ENCODE measurements at regions of chr14 and their contacts with region 1.

Region 1: DNA sequence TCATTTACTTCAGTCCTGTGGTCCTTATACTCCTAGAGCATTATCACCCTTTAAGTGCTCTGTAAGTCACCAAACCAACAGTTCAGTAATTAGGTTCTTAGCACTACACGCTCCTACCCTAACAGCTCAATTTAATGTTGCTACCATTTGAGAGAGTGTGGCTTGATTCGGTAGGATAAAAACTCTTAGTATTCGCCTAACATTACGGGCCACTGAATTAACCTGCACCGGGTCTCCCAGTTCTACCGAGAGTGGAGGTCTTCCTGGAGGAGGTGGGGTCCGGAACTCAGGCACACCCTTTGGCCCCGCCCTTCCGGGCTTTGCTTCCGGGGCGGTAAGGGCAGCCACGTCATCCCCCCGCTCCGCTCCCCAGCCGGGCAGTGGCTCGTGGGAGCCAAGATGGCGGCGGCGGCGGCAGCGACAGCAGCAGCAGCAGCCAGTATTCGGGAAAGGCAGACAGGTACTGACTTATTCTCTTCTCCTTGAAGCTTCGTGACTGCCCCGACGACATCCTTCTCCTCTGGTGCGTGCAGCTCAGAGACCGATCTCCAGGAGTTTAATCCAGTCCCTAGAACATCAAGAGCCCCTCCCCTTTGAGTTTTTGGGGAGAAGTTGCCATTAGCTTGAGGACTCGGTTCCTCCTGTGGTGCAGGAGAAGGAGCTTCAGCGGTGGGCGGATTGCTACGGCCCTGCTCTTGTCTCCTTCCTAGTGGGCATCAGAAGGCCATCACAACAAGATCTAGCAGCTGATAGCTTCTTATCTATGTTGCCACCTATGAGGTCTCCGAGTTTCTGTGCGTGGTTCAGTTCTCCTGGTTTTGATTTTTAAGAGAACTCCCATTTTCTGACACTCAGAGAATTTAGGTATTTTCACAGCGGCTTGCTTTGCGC is at the start of gene SCFD1:
- DNase-seq: peak; percentile 84 to 95 (median 90)
- ATAC-seq: peak; percentile 98
- H3K4me3 ChIP-seq: peak within 1 kb of the TSS; percentile 76
- H3K4me3 Mint-ChIP-seq: peak within 1 kb of the TSS; percentile 91
- H3K27ac ChIP-seq: peak within 1 kb of the TSS; percentile 63 to 69
- H3K27ac Mint-ChIP-seq: peak within 1 kb of the TSS; percentile 92
- H3K4me1 ChIP-seq: peaks cover 19% of the 10 kb centered on the region
- H3K4me1 Mint-ChIP-seq: peaks cover 47% of the 10 kb centered on the region
- H3K27me3 ChIP-seq: no peaks in the 10 kb centered on the region
- H3K27me3 Mint-ChIP-seq: no peaks in the 10 kb centered on the region
- CTCF ChIP-seq: no peak
- total RNA-seq, gene SCFD1: 59.0 to 63.6 TPM

Region 2: DNA sequence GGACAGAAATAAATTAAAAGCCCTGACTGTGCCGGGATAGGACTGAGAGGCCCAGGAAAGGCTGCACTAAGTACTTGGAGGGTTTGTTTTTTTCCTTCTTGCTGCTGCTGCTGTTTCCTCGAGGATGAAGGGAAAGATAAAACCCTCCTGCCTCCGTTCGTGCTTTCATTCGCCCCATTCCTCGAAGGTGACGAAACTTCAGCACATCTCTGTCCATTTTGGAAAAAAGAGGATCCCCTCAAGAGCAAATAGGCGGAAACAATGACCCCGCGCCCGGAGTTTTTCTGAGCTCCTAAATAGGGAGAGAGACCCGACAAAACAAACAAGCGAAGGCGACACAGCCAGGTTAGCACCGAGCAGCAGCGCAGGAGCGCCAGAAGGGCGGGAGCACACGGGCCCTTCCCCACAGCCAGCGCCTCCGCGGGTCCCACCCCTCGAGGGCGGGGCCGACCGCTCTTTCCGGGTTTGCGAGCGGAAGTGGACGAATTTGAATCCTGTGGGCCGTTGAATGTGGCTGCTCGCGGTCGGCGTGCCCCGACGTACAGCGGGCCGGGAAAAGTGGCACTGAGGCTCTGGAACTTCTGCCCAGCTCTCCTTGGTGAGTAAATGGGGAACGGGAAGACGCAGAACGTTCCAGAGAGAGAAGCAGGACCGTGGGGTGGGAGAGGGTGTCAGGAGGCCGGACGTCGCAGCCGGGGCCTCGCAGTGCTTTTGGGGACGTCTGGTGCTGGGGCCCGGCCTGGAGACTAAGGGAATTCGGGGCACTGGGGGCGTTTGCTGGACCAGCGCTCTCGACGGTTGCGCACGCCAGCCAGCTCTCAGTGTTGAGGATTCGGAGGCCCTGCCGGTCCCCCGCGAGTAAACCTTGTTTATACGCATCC is 63.3 kb before region 1 on chr14 and contains the start of gene G2E3:
- CTCF ChIA-PET with region 1: no interaction called
- POLR2A ChIA-PET with region 1: interaction called, 16 read pairs
- intact Hi-C with region 1: loop called (anchors 2 kb)
- DNase-seq: peak; percentile 71 to 93 (median 84)
- ATAC-seq: peak; percentile 98
- H3K4me3 ChIP-seq: peak within 1 kb of the TSS; percentile 88
- H3K4me3 Mint-ChIP-seq: peak within 1 kb of the TSS; percentile 100
- H3K27ac ChIP-seq: peak within 1 kb of the TSS; percentile 73 to 83
- H3K27ac Mint-ChIP-seq: peak within 1 kb of the TSS; percentile 96
- H3K4me1 ChIP-seq: peaks cover 20% of the 10 kb centered on the region
- H3K4me1 Mint-ChIP-seq: peaks cover 46% of the 10 kb centered on the region
- H3K27me3 ChIP-seq: no peaks in the 10 kb centered on the region
- H3K27me3 Mint-ChIP-seq: no peaks in the 10 kb centered on the region
- CTCF ChIP-seq: no peak
- total RNA-seq, gene G2E3: 23.8 to 24.3 TPM

Region 3: GRCh38 chr14:30681752-30682355 is 59.7 kb after region 1 on chr14:
- CTCF ChIA-PET with region 1: no interaction called
- POLR2A ChIA-PET with region 1: no interaction called
- intact Hi-C with region 1: no loop called
- DNase-seq: peak in 1 of 14 experiments; percentile 4
- ATAC-seq: no peak
- H3K4me3 ChIP-seq: no peak overlapping the region
- H3K4me3 Mint-ChIP-seq: no peak overlapping the region
- H3K27ac ChIP-seq: no peak overlapping the region
- H3K27ac Mint-ChIP-seq: no peak overlapping the region
- H3K4me1 ChIP-seq: no peaks in the 10 kb centered on the region
- H3K4me1 Mint-ChIP-seq: no peaks in the 10 kb centered on the region
- H3K27me3 ChIP-seq: no peaks in the 10 kb centered on the region
- H3K27me3 Mint-ChIP-seq: no peaks in the 10 kb centered on the region
- CTCF ChIP-seq: no peak

Region 4: DNA sequence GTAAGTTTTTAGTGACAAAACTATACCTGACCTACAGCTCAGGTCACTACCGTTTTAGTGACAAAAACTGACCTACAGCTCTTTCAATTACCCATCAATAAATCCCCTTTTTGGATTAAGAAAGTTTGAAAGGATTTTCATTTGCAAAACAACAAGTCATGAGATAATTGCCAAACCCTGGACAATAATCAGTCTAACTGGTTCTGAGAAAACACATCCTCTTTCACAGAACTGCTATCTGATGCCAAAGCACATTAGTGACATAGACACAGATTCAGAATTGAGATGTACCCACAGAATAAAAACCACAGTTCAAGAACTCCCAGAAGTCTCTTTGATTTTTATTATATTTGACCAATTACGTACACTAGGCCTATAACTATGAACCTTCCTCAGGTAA is 126.2 kb after region 1 on chr14:
- CTCF ChIA-PET with region 1: no interaction called
- POLR2A ChIA-PET with region 1: no interaction called
- intact Hi-C with region 1: no loop called
- DNase-seq: no peak
- ATAC-seq: no peak
- H3K4me3 ChIP-seq: no peak overlapping the region
- H3K4me3 Mint-ChIP-seq: no peak overlapping the region
- H3K27ac ChIP-seq: no peak overlapping the region
- H3K27ac Mint-ChIP-seq: no peak overlapping the region
- H3K4me1 ChIP-seq: no peaks in the 10 kb centered on the region
- H3K4me1 Mint-ChIP-seq: no peaks in the 10 kb centered on the region
- H3K27me3 ChIP-seq: no peaks in the 10 kb centered on the region
- H3K27me3 Mint-ChIP-seq: no peaks in the 10 kb centered on the region
- CTCF ChIP-seq: no peak

Region 5: DNA sequence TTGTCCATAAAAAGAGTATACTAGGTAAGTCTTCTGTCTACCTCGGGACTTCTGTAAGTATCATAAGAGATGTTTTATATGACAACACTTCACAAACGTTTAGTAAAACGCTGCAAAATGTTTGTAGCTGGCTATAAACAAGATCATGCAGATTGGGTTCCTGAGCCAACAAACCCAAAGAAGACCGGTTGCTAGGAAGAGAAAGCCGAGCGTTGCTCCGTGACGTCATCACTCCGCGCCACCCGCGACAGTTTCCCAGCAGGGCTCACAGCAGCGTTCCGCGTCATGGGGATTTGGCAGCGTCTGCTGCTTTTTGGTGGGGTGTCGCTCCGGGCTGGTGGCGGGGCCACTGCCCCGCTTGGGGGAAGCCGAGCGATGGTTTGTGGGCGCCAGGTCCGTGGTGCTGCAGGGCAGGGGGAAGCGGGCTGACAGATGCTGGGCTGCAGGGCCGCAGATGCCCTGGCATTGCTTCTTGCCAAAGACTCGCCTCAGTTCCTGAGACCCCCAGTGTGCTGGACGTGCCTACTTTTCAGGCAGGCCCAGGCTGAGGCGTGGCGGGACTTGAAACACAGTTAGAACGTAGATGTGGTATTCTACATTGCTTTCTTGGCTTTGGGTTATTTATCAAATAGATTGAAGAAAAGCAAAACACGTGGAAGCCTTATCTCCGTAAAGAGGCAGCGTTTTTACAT is 939.1 kb after region 1 on chr14 and contains the start of gene NUBPL:
- CTCF ChIA-PET with region 1: no interaction called
- POLR2A ChIA-PET with region 1: no interaction called
- intact Hi-C with region 1: loop called in 1 of 2 experiments (anchors 10 kb)
- DNase-seq: peak; percentile 94 to 99 (median 97)
- ATAC-seq: peak; percentile 91
- H3K4me3 ChIP-seq: peak within 1 kb of the TSS; percentile 84
- H3K4me3 Mint-ChIP-seq: peak within 1 kb of the TSS; percentile 95
- H3K27ac ChIP-seq: peak within 1 kb of the TSS; percentile 80 to 84
- H3K27ac Mint-ChIP-seq: peak within 1 kb of the TSS; percentile 98
- H3K4me1 ChIP-seq: no peaks in the 10 kb centered on the region
- H3K4me1 Mint-ChIP-seq: peaks cover 34% of the 10 kb centered on the region
- H3K27me3 ChIP-seq: no peaks in the 10 kb centered on the region
- H3K27me3 Mint-ChIP-seq: peaks cover 26% of the 10 kb centered on the region
- CTCF ChIP-seq: no peak
- total RNA-seq, gene NUBPL: 7.2 to 8.2 TPM

Measured in CD4-positive, alpha-beta T cell (primary cell).